ENCODE measurements at regions of chr1 and their contacts with region 1.

Region 1: DNA sequence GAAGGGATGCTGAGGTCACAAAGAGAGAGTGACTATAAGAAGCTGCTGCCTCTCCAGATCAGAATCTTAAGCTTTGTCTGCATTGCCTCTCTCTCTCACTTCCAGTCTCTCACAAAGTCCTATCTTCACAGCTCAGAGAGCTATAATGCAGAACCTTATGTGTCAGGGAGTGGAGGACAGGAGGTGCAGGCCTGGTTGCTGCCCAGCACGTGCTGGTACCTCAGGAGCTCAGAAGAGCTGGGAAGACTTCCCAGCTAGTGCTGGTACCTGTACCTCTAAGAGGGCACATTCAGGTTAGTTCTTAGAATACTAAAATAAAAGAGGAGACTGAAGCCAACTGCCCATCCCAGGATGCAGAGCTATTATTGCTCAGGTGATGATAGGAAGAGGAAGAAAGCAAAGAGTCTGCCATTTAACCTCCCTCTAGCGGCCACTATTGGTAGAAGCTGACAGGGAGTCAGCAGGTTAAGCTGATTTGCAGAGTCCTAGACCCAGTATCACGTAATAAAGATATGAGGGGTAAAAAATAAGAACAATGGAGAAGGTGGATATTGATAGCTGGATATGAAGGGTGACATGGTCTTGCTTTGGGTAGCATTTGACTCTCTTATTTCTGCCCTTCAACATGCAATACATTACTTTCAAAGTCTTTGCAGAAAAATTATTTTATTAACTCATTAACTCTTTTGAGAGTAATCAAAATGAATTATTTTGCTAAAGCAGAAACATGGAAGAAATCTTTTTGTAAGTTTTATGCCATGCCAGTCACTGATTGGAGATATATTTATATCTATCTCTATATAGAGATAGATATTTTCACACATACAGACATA is 138.1 kb upstream of the HMCN1 start:
- DNase-seq: peak; percentile 45
- H3K4me3 ChIP-seq: no peak overlapping the region
- H3K27ac ChIP-seq: no peak overlapping the region
- H3K4me1 ChIP-seq: no peaks in the 10 kb centered on the region
- H3K27me3 ChIP-seq: no peaks in the 10 kb centered on the region
- CTCF ChIP-seq: peak; percentile 50 to 55
- POLR2A ChIP-seq: no peak

Region 2: DNA sequence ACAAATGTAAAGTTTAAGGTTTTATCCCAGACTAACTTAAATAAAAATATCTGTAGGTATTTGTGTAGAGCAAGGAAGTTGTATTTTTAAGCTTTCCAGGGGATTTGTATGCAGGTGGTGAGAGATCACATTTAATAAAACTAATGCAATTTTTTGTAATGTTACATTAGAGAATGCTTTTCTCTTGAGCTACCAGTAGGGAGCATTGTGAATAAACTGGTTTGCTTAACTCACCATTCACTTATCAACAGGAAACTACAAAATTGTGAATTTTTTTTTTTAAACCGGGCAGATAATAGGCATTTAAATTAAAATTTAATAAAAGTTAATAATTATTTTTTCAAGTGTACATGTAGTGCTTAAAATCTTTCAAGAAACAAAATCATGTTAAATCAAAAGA is 357.6 kb before region 1 on chr1:
- CTCF ChIA-PET with region 1: interaction called, 27 read pairs
- POLR2A ChIA-PET with region 1: no interaction called
- dilution Hi-C with region 1: no loop called
- intact Hi-C with region 1: no loop called
- DNase-seq: no peak
- H3K4me3 ChIP-seq: no peak overlapping the region
- H3K27ac ChIP-seq: no peak overlapping the region
- H3K4me1 ChIP-seq: no peaks in the 10 kb centered on the region
- H3K27me3 ChIP-seq: no peaks in the 10 kb centered on the region
- CTCF ChIP-seq: peak in 1 of 2 donors; percentile 27
- POLR2A ChIP-seq: no peak

Region 3: DNA sequence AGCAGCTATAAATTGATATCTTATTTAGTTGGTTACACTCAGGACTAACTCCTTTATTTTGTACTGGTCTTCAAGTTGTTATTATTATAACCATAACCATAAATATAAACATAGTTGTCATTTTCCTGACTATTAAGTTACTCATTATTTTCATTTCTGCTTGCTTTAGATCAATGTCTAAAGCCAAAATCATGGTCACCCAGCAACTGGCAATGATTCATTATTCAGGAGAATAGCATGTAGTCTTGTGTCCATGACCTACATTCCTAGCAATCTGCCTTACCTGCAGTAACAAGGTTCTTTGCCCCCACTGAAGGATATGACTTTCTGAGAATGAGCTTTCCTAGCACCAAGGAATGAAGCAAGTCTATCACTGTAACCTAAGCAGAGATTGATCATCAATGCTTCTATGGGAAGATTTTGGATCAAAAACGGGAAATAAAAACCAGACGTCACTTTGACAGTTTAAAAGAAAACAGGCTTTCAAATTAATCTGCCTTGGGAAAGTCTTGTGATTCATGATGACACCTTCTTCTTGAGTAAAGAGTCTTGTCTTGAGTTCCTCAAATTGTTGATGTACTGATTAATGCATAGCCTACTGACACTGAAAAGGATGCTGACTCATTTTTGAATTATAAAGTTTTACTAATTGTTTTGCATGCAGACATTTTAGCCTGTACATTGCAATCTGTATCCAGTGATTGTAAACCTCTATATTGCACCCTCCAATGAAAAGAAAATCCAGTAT is 75.7 kb before region 1 on chr1:
- CTCF ChIA-PET with region 1: no interaction called
- POLR2A ChIA-PET with region 1: no interaction called
- dilution Hi-C with region 1: no loop called
- intact Hi-C with region 1: no loop called
- DNase-seq: peak; percentile 57
- H3K4me3 ChIP-seq: no peak overlapping the region
- H3K27ac ChIP-seq: peak overlapping the region; percentile 35
- H3K4me1 ChIP-seq: peaks cover 8% of the 10 kb centered on the region
- H3K27me3 ChIP-seq: no peaks in the 10 kb centered on the region
- CTCF ChIP-seq: no peak
- POLR2A ChIP-seq: no peak

Region 4: DNA sequence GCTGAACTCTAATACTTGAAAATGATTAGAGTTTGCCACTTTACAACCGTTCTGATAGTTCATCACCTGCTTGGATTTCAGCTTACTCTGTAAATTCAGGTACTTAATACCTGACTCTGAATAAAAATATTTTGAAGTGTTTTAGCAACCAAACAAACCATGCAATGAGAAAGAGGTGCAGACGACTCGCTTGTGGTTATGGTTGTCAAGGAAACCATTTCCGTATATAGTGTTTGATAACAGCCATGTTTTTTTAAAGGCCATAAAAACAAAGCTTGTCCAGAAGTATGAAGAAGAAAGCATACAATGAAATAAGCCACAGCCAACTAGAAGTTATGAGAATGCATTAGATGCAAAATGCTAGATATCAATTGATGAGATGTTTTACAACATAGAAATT is 29.1 kb before region 1 on chr1:
- CTCF ChIA-PET with region 1: interaction called, 30 read pairs
- POLR2A ChIA-PET with region 1: no interaction called
- dilution Hi-C with region 1: no loop called
- intact Hi-C with region 1: loop called (anchors 2 kb)
- DNase-seq: peak; percentile 87
- H3K4me3 ChIP-seq: no peak overlapping the region
- H3K27ac ChIP-seq: peak overlapping the region; percentile 38
- H3K4me1 ChIP-seq: peaks cover 13% of the 10 kb centered on the region
- H3K27me3 ChIP-seq: no peaks in the 10 kb centered on the region
- CTCF ChIP-seq: no peak
- POLR2A ChIP-seq: no peak

Region 5: DNA sequence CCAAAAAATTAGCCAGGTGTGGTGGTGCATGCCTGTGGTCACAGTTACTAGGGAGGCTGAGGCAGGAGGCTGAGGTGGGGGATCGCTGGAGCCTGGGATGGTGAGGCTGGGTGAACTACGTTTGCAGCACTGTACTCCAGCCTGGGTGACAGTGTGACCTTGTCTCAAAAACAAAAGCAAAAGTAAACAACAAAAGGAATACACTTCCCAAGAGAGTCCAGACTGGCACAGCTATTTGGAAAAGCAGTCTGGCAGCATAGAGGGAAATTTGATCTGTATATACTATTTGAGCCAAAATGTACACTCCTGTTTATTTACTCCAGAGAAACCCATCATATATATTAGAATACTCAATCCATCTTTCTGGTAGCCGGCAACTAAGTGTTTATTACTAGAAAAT is 31.1 kb after region 1 on chr1:
- CTCF ChIA-PET with region 1: interaction called, 12 read pairs
- POLR2A ChIA-PET with region 1: no interaction called
- dilution Hi-C with region 1: no loop called
- intact Hi-C with region 1: no loop called
- DNase-seq: no peak
- H3K4me3 ChIP-seq: no peak overlapping the region
- H3K27ac ChIP-seq: no peak overlapping the region
- H3K4me1 ChIP-seq: no peaks in the 10 kb centered on the region
- H3K27me3 ChIP-seq: no peaks in the 10 kb centered on the region
- CTCF ChIP-seq: no peak
- POLR2A ChIP-seq: no peak

Region 6: DNA sequence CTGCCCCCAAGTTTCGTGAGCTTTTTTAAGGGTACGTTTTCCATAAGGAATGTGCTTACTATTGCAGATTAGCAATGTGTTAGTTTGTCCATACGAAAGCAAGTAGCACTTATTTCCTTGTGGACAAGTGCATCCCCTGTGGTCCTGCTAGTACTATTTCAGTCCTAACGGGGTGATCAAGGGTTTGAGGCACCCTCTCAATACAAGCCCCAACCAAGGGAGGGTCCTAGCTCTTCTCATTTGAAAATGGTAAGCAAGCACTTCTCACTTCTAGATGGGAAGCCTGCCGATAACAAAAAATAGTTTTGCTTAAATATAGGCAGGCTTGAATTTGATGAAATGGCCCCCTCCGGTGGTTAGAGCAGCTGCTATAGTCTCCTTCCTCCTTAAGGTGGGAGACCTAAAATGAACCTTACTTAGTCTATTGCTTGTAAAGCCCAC is 74.2 kb after region 1 on chr1:
- CTCF ChIA-PET with region 1: interaction called, 25 read pairs
- POLR2A ChIA-PET with region 1: no interaction called
- dilution Hi-C with region 1: no loop called
- intact Hi-C with region 1: no loop called
- DNase-seq: peak; percentile 74
- H3K4me3 ChIP-seq: no peak overlapping the region
- H3K27ac ChIP-seq: no peak overlapping the region
- H3K4me1 ChIP-seq: peaks cover 17% of the 10 kb centered on the region
- H3K27me3 ChIP-seq: no peaks in the 10 kb centered on the region
- CTCF ChIP-seq: peak; percentile 44 to 57
- POLR2A ChIP-seq: no peak

Region 7: DNA sequence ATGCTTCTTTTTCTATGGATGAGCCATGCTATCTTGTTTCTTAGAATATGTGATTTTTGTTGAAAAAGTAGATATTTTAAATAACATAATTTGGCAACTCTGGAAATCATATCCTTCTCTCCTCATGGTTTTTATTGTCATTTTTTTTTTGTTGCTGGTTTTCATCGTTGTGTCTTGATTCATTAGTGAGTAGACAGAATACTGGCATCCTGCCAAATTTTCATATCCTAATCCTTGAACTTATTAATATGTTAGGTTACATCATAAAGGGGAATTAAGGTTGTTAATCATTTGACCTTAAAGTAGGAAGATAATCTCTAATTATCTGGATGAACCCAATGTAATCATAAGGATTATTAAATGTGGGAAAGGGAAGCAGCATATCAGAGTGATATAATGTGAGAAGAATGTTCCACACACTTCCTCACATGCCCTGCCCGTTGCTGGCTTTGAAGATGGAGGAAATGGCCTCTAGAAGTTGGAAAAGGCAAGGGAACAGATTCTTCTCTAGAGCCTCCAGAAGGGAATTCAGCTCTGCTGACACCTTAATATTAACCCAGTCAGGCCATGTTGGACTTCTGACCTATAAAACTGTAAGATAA is 437.8 kb after region 1 on chr1:
- CTCF ChIA-PET with region 1: no interaction called
- POLR2A ChIA-PET with region 1: no interaction called
- dilution Hi-C with region 1: no loop called
- intact Hi-C with region 1: no loop called
- DNase-seq: peak; percentile 50
- H3K4me3 ChIP-seq: no peak overlapping the region
- H3K27ac ChIP-seq: no peak overlapping the region
- H3K4me1 ChIP-seq: no peaks in the 10 kb centered on the region
- H3K27me3 ChIP-seq: no peaks in the 10 kb centered on the region
- CTCF ChIP-seq: no peak
- POLR2A ChIP-seq: no peak